Esophagus squamous epithelium (tissue), 5 donors: ENCODE measurements at regions of chr2 and their contacts with region 1.

Region 1: GRCh38 chr2:190515687-190516086 is 18.8 kb downstream of the NEMP2 start:
- DNase-seq: no peak
- H3K4me3 ChIP-seq: no peak overlapping the region
- H3K27ac ChIP-seq: no peak overlapping the region
- H3K4me1 ChIP-seq: no peaks in the 10 kb centered on the region
- H3K27me3 ChIP-seq: no peaks in the 10 kb centered on the region
- CTCF ChIP-seq: no peak
- POLR2A ChIP-seq: no peak

Region 2: GRCh38 chr2:190387422-190387821 is 128.3 kb before region 1 on chr2:
- intact Hi-C with region 1: loop called (anchors 5 kb)
- DNase-seq: no peak
- H3K4me3 ChIP-seq: no peak overlapping the region
- H3K27ac ChIP-seq: no peak overlapping the region
- H3K4me1 ChIP-seq: peaks cover 0 to 4% (median 0%) of the 10 kb centered on the region in 3 donors
- H3K27me3 ChIP-seq: no peaks in the 10 kb centered on the region
- CTCF ChIP-seq: no peak
- POLR2A ChIP-seq: no peak